Activated CD4-positive, alpha-beta memory T cell treated with anti-CD3 and anti-CD28 coated beads, Interleukin-2, amount 10 ng/mL, durations not matched to agents 7 days and 5 days (primary cell): ENCODE measurements at regions of chr2 and their contacts with region 1.

Region 1: DNA sequence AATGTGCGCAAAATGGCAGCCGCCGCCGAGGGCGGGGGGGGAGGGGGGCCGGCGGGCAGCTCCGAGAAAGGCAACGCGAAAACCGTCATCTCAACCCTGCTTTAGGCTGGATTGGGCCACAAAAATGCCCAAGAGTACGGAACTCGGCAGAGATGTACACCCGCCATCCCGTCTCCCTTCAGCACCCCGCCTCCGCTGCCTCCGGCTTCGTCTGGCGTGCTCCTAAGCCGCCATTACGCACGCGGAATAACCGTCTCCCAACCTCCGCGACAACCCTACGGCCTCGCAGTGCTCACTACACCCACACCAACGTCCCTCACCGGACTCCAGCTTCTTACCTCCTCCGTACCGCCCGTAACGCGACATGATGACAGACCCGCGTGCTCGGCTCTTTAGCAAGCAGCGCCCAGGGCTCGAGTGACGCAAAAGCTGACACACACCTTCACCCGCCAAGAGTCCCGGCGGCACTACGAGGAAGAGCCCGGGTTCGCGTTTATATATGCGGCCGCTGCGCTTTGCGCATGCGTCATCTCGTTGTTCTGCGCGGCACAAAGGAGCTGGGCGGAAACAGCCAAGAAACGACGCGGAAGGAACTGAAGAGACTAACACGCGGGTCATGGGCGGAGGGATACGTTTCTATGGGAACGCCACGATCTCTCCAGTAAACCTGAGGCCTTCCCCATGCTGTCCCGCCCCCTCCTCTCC is at the start of gene SRSF7:
- DNase-seq: peak; percentile 98
- H3K4me3 Mint-ChIP-seq: peak within 1 kb of the TSS; percentile 97
- H3K27ac Mint-ChIP-seq: peak within 1 kb of the TSS; percentile 98
- H3K4me1 Mint-ChIP-seq: peaks cover 55% of the 10 kb centered on the region
- H3K27me3 Mint-ChIP-seq: no peaks in the 10 kb centered on the region
- total RNA-seq, gene SRSF7: 243 to 249 TPM

Region 2: GRCh38 chr2:38554973-38555595 is 196.0 kb before region 1 on chr2:
- CTCF ChIA-PET with region 1: interaction called, 5 read pairs
- POLR2A ChIA-PET with region 1: interaction called, 11 read pairs
- DNase-seq: no peak
- H3K4me3 Mint-ChIP-seq: no peak overlapping the region
- H3K27ac Mint-ChIP-seq: no peak overlapping the region
- H3K4me1 Mint-ChIP-seq: peaks cover 3% of the 10 kb centered on the region
- H3K27me3 Mint-ChIP-seq: no peaks in the 10 kb centered on the region

Region 3: GRCh38 chr2:38602732-38603401 is 148.2 kb before region 1 on chr2 and contains the start of gene HNRNPLL:
- CTCF ChIA-PET with region 1: interaction called, 10 read pairs
- POLR2A ChIA-PET with region 1: interaction called, 364 read pairs
- DNase-seq: peak; percentile 97
- H3K4me3 Mint-ChIP-seq: peak within 1 kb of the TSS; percentile 89
- H3K27ac Mint-ChIP-seq: peak within 1 kb of the TSS; percentile 89
- H3K4me1 Mint-ChIP-seq: peaks cover 46% of the 10 kb centered on the region
- H3K27me3 Mint-ChIP-seq: no peaks in the 10 kb centered on the region
- total RNA-seq, gene HNRNPLL: 104 to 119 TPM

Region 4: DNA sequence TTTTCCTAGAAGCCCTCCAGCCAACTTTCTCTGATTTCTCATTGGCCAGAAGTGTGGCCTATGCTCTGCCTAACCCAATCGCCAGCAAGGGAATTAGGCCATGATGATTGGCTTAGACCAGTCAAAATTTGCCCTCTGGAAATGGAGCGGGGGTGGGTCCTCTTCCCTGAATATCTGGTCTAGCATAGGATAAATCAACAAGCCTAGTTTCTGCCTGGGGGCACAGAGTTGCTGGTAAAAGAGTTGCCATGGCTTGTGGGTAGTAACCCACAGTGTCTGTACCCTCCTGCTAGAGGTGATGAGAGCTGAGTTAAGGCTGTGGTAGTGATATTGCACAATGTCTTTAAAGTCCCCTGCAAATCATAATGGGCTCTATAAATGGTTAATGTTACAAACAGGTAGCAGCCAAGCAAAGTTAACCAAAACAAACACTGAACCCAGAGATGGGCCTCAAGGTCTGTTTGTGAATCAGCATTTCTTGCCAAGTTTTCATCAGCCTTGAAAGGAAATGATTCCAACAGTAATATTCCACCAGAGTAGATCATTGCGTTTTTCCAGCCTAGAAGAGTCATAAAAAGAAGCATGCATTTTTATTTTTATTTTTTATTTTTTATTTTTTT is 65.8 kb before region 1 on chr2:
- CTCF ChIA-PET with region 1: interaction called, 3 read pairs
- POLR2A ChIA-PET with region 1: interaction called, 24 read pairs
- DNase-seq: no peak
- H3K4me3 Mint-ChIP-seq: no peak overlapping the region
- H3K27ac Mint-ChIP-seq: peak overlapping the region; percentile 12
- H3K4me1 Mint-ChIP-seq: peaks cover 76% of the 10 kb centered on the region
- H3K27me3 Mint-ChIP-seq: no peaks in the 10 kb centered on the region

Region 5: GRCh38 chr2:38763228-38763627 is 12.2 kb after region 1 on chr2:
- CTCF ChIA-PET with region 1: no interaction called
- POLR2A ChIA-PET with region 1: interaction called, 64 read pairs
- DNase-seq: no peak
- H3K4me3 Mint-ChIP-seq: no peak overlapping the region
- H3K27ac Mint-ChIP-seq: no peak overlapping the region
- H3K4me1 Mint-ChIP-seq: peaks cover 10% of the 10 kb centered on the region
- H3K27me3 Mint-ChIP-seq: no peaks in the 10 kb centered on the region

Region 6: GRCh38 chr2:38875576-38876367 is 124.7 kb after region 1 on chr2 and contains the starts of genes DHX57 and MORN2:
- CTCF ChIA-PET with region 1: no interaction called
- POLR2A ChIA-PET with region 1: interaction called, 17 read pairs
- DNase-seq: peak; percentile 86
- H3K4me3 Mint-ChIP-seq: peak within 1 kb of the TSS; percentile 95
- H3K27ac Mint-ChIP-seq: peak within 1 kb of the TSS; percentile 60
- H3K4me1 Mint-ChIP-seq: peaks cover 21% of the 10 kb centered on the region
- H3K27me3 Mint-ChIP-seq: no peaks in the 10 kb centered on the region
- total RNA-seq, gene DHX57: 12.1 to 12.8 TPM
- total RNA-seq, gene MORN2: 1.3 to 1.7 TPM